Mammary epithelial cell (primary cell): ENCODE measurements at regions of chr16 and their contacts with region 1.

Region 1: DNA sequence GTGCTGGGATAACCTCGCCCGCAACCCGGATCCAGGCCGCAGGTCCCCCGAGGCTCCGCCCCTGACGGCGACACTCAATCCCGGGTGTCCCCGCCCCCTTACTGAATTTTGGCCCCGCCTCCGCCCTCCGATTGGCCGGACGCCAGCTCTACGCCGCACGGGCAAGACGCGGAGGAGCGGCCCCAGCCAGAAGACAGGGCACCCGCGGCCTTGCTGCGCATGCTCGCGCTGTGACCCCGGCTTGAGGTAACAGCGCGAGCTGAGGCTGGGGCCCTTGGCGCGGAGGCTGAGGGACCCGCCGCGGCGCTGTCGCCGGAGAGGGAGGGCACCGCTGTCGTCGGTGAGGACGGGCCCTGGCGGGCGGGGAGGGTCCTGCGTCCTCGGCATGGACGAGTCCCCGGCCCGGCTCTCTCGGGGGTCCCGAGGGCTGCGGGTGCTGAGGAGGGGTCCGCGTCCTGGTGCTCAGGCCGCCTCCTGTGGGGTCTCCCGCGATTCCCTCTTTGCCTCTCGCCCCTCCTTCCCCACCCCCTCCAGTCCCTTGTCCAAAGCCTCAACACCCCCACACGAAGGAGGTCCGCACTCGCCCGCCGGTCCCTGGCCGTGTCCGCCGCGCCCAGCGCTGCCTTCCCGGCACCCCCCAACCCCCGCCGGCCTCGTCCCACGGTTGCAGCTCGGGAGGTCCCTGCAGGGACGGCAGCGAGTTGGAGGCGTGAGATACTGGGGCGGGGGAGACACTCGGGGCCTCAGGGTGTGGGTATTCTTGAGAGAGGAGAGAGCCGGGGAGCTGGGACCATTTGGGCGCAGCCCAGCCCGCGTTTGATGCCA is at the start of gene FLYWCH2:
- DNase-seq: peak; percentile 96
- H3K4me3 ChIP-seq: peak within 1 kb of the TSS; percentile 66 to 93 (median 70)
- H3K27ac ChIP-seq: peak within 1 kb of the TSS; percentile 56
- H3K4me1 ChIP-seq: peaks cover 8% of the 10 kb centered on the region
- H3K27me3 ChIP-seq: no peaks in the 10 kb centered on the region
- CTCF ChIP-seq: no peak
- total RNA-seq, gene FLYWCH2: 20.2 to 38.3 TPM

Region 2: DNA sequence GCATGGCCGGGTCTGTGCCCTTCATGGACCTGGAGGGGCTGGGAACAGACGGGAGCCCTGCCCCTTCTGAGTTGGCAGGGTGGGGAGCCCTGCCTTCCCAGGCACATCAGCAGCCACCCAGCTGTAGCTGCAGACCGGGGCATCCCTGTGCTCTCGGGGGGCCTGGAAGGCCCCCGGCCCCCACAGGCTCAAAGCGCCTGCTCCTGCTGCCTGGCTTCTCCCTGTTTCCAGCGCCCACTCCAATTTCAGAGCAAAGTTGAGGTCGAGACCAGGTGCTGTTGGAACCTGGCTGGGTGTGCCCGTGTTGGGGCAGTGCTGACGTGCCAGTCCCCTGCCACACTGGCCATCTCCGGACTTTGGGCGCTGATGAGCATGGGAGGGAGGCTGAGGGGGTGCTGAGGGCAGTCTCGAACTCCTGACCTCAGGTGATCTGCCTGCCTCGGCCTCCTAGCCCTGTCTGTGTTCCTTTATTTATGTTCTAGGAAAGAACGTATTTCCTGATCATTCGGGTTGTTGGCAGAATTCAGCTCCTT is 158.4 kb before region 1 on chr16:
- CTCF ChIA-PET with region 1: no interaction called
- dilution Hi-C with region 1: no loop called
- in situ Hi-C with region 1: no loop called
- intact Hi-C with region 1: no loop called
- DNase-seq: no peak
- H3K4me3 ChIP-seq: no peak overlapping the region
- H3K27ac ChIP-seq: no peak overlapping the region
- H3K4me1 ChIP-seq: peaks cover 5% of the 10 kb centered on the region
- H3K27me3 ChIP-seq: no peaks in the 10 kb centered on the region
- CTCF ChIP-seq: no peak

Region 3: GRCh38 chr16:2770057-2770951 is 112.9 kb before region 1 on chr16:
- CTCF ChIA-PET with region 1: no interaction called
- dilution Hi-C with region 1: loop called (anchors 5 kb)
- in situ Hi-C with region 1: no loop called
- intact Hi-C with region 1: no loop called
- DNase-seq: no peak
- H3K4me3 ChIP-seq: no peak overlapping the region
- H3K27ac ChIP-seq: peak overlapping the region; percentile 2
- H3K4me1 ChIP-seq: peaks cover 45% of the 10 kb centered on the region
- H3K27me3 ChIP-seq: no peaks in the 10 kb centered on the region
- CTCF ChIP-seq: peak in 1 of 2 donors; percentile 8

Region 4: GRCh38 chr16:2905431-2906387 is 22.5 kb after region 1 on chr16:
- CTCF ChIA-PET with region 1: interaction called, 7 read pairs
- dilution Hi-C with region 1: no loop called
- in situ Hi-C with region 1: no loop called
- intact Hi-C with region 1: loop called (anchors 2 kb)
- DNase-seq: peak; percentile 99
- H3K4me3 ChIP-seq: peak overlapping the region; percentile 82 to 94 (median 94)
- H3K27ac ChIP-seq: no peak overlapping the region
- H3K4me1 ChIP-seq: peaks cover 14% of the 10 kb centered on the region
- H3K27me3 ChIP-seq: no peaks in the 10 kb centered on the region
- CTCF ChIP-seq: no peak